A673 (cell line): ENCODE measurements at regions of chr1 and their contacts with region 1.

Region 1: GRCh38 chr1:152001391-152002249 is 8.0 kb upstream of the S100A10 start:
- DNase-seq: peak; percentile 90
- H3K4me3 ChIP-seq: no peak overlapping the region
- H3K27ac ChIP-seq: no peak overlapping the region
- H3K4me1 ChIP-seq: no peaks in the 10 kb centered on the region
- H3K27me3 ChIP-seq: peaks cover 33% of the 10 kb centered on the region
- CTCF ChIP-seq: peak; percentile 92

Region 2: DNA sequence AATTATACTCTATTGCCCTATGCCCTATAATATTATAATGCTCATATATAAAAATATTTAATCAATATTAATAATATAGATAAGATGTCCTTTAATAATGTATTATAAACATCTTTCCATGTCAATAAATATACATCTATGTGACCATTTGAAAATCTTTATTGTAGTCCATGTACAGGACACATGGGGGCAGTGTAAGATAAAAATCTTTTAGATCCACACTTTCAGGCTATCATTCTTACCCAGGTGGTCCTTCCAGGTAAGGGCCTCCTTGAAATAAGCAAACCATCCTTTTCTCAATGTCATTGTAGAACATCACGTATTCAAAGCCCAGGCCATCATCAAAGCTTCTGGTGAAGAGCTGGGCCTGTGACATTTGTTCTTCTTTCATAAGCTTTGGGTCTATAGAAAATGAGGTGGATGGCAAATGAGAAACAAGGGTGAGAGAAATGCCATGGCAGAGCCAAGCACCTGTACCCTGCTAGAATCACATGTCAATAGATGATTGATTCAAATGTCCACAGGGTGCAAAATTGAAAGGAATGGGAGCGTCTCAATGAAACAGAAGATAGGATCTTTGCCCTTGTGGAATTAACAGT is 112.5 kb before region 1 on chr1:
- CTCF ChIA-PET with region 1: interaction called, 6 read pairs
- POLR2A ChIA-PET with region 1: no interaction called
- intact Hi-C with region 1: loop called (anchors 1 kb)
- DNase-seq: no peak
- H3K4me3 ChIP-seq: no peak overlapping the region
- H3K27ac ChIP-seq: no peak overlapping the region
- H3K4me1 ChIP-seq: no peaks in the 10 kb centered on the region
- H3K27me3 ChIP-seq: peaks cover 3% of the 10 kb centered on the region
- CTCF ChIP-seq: peak; percentile 53

Region 3: GRCh38 chr1:151934048-151934493 is 67.5 kb before region 1 on chr1:
- CTCF ChIA-PET with region 1: interaction called, 13 read pairs
- POLR2A ChIA-PET with region 1: no interaction called
- intact Hi-C with region 1: loop called (anchors 1 kb)
- DNase-seq: peak; percentile 75
- H3K4me3 ChIP-seq: no peak overlapping the region
- H3K27ac ChIP-seq: no peak overlapping the region
- H3K4me1 ChIP-seq: no peaks in the 10 kb centered on the region
- H3K27me3 ChIP-seq: no peaks in the 10 kb centered on the region
- CTCF ChIP-seq: peak; percentile 82